ENCODE measurements at regions of chr10 and their contacts with region 1.

Region 1: DNA sequence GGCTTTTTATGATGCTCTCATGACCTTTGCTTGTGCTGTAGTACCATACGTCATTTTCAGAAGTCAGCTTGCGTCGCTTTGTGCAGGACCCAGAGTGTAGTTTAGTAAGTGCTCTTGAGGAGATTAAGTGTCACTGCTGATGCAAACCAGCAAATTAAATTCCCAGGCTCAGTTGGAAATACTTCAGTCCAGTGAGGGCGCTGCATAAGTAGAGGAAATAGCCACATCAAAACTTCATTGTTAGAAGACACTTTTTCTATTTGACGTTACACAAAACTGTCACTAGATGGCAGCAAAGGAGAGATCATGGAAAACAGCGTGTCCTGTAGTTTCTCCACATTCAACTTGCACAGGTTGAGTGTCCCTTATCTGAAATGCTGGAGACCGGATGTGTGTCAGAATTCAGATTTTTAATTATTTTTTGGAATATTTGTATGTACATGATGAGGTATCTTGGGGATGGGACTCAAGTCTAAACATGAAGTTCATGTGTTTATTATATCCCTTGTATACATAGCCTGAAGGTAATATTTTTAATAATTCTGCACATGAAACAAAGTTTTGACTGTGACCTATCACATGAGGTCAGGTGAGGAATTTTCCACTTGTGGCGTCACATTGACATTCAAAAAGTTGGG is 7.9 kb downstream of the ZNF22 start:
- DNase-seq: peak; percentile 87
- ATAC-seq: peak; percentile 98
- H3K4me3 ChIP-seq: no peak overlapping the region
- H3K27ac ChIP-seq: no peak overlapping the region
- H3K4me1 ChIP-seq: peaks cover 0 to 5% of the 10 kb centered on the region in 2 experiments; a peak in 2 of 4 replicates
- H3K27me3 ChIP-seq: no peaks in the 10 kb centered on the region
- CTCF ChIP-seq: peak; percentile 63 to 97 (median 85)
- POLR2A ChIP-seq: no peak
- RAD21 ChIP-seq: peak; percentile 95

Region 2: GRCh38 chr10:44696496-44696895 is 312.1 kb before region 1 on chr10:
- CTCF ChIA-PET with region 1: no interaction called
- POLR2A ChIA-PET with region 1: no interaction called
- RAD21 ChIA-PET with region 1: no interaction called
- intact Hi-C with region 1: no loop called
- DNase-seq: no peak
- ATAC-seq: no peak
- H3K4me3 ChIP-seq: no peak overlapping the region
- H3K27ac ChIP-seq: no peak overlapping the region
- H3K4me1 ChIP-seq: no peaks in the 10 kb centered on the region
- H3K27me3 ChIP-seq: peaks cover 8% of the 10 kb centered on the region; the same call in 1 of the 2 replicates
- CTCF ChIP-seq: no peak
- POLR2A ChIP-seq: no peak
- RAD21 ChIP-seq: no peak

Region 3: GRCh38 chr10:44706745-44707144 is 301.9 kb before region 1 on chr10:
- CTCF ChIA-PET with region 1: no interaction called
- POLR2A ChIA-PET with region 1: no interaction called
- RAD21 ChIA-PET with region 1: no interaction called
- intact Hi-C with region 1: no loop called
- DNase-seq: peak; percentile 3
- ATAC-seq: no peak
- H3K4me3 ChIP-seq: no peak overlapping the region
- H3K27ac ChIP-seq: no peak overlapping the region
- H3K4me1 ChIP-seq: no peaks in the 10 kb centered on the region
- H3K27me3 ChIP-seq: no peaks in the 10 kb centered on the region; the same call in 1 of the 2 replicates
- CTCF ChIP-seq: no peak
- POLR2A ChIP-seq: no peak
- RAD21 ChIP-seq: no peak

Region 4: DNA sequence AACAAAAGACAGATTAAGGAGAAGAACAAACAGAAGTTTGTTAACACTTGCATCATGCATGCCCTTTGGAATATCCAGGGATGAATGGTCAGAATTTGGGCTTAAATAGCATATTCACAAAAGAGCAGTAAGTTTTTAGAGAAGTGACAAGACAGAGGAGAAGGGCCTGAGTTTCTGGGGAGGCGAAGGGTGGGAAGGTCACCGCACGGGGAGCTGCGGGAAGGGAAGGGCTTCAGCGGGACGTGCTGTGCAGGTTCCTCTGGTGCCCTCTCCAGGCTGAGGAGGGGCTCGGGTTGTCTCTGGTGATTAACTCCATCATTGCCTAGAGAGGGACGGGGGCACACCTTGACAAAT is 18.4 kb before region 1 on chr10:
- CTCF ChIA-PET with region 1: no interaction called
- POLR2A ChIA-PET with region 1: no interaction called
- RAD21 ChIA-PET with region 1: no interaction called
- intact Hi-C with region 1: no loop called
- DNase-seq: no peak
- ATAC-seq: peak; percentile 78
- H3K4me3 ChIP-seq: no peak overlapping the region
- H3K27ac ChIP-seq: no peak overlapping the region
- H3K4me1 ChIP-seq: no peaks in the 10 kb centered on the region
- H3K27me3 ChIP-seq: no peaks in the 10 kb centered on the region
- CTCF ChIP-seq: peak; percentile 27 to 41 (median 30); a peak in 4 of 6 replicates
- POLR2A ChIP-seq: no peak
- RAD21 ChIP-seq: peak; percentile 70

Region 5: DNA sequence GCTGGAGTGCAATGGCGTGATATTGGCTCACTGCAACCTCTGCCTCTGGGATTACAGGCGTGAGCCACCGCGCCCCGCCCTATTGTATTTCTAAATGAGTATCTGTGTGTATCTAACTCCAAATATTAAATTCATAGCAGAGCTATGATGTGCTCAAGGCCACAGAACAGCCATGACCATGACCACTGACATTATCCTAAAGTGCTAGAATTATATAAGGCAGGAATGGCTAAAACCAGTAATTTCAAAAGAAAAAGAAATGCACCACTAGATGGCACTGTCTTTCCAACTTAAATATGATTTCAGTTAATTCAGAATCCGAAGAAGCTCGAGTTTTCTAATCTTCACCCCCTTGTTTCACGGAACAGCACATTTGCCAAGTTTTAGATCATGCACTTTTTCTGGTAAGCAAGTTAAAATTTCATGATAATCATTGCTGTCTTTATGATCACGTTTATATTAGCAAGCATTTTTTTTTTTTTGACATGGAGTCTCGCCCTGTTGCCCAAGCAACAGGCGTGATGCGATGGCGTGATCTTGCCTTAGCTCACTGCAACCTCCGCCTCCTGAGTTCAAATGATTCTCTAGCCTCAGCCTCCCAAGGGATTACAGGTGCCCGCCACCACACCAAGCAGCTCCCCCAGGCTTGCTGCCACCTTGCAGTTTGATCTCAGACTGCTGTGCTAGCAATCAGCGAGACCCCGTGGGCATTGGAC is 241.5 kb after region 1 on chr10:
- CTCF ChIA-PET with region 1: no interaction called
- POLR2A ChIA-PET with region 1: no interaction called
- RAD21 ChIA-PET with region 1: no interaction called
- intact Hi-C with region 1: loop called (anchors 5 kb)
- DNase-seq: peak; percentile 53
- ATAC-seq: peak; percentile 85
- H3K4me3 ChIP-seq: peak overlapping the region; percentile 40 to 46
- H3K27ac ChIP-seq: peak overlapping the region; percentile 9; the same call in 1 of the 2 replicates
- H3K4me1 ChIP-seq: peaks cover 0 to 10% of the 10 kb centered on the region in 2 experiments; a peak in 1 of 4 replicates
- H3K27me3 ChIP-seq: no peaks in the 10 kb centered on the region
- CTCF ChIP-seq: peak; percentile 33 to 70 (median 51); a peak in 4 of 6 replicates
- POLR2A ChIP-seq: no peak
- RAD21 ChIP-seq: peak; percentile 74

Region 6: DNA sequence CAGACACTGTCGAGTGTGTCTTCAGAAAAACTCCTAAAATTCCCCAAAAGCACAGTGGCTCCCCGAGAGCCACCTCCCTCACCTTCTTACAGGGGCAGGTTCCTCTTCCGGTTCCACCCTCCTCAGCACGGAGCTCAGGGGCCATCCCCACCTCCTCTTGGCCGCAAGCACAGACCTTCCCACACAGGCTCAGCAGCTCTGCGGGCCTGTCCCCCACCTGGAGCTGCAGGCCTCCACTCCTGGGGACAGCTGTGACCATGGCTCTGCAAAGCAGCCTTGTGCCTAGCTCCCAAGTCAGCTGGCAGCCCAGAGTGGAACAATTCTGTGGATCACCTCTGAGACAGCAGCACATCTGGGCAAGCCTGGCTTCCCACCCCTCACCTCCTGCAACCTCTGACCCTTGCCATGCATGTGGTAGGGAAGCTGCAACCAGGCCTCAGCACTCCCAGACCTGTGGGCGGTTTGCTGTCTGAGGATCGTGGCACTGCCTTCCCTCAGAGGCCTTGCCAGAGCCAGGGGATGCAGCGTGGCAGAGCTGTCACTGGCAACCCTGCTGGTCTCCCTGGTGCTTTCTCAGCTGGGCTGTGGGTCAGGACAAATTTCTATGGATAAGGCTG is 445.1 kb after region 1 on chr10:
- CTCF ChIA-PET with region 1: no interaction called
- POLR2A ChIA-PET with region 1: no interaction called
- RAD21 ChIA-PET with region 1: no interaction called
- intact Hi-C with region 1: loop called (anchors 10 kb)
- DNase-seq: no peak
- ATAC-seq: no peak
- H3K4me3 ChIP-seq: no peak overlapping the region
- H3K27ac ChIP-seq: no peak overlapping the region
- H3K4me1 ChIP-seq: no peaks in the 10 kb centered on the region
- H3K27me3 ChIP-seq: no peaks in the 10 kb centered on the region
- CTCF ChIP-seq: no peak
- POLR2A ChIP-seq: no peak
- RAD21 ChIP-seq: no peak

Region 7: DNA sequence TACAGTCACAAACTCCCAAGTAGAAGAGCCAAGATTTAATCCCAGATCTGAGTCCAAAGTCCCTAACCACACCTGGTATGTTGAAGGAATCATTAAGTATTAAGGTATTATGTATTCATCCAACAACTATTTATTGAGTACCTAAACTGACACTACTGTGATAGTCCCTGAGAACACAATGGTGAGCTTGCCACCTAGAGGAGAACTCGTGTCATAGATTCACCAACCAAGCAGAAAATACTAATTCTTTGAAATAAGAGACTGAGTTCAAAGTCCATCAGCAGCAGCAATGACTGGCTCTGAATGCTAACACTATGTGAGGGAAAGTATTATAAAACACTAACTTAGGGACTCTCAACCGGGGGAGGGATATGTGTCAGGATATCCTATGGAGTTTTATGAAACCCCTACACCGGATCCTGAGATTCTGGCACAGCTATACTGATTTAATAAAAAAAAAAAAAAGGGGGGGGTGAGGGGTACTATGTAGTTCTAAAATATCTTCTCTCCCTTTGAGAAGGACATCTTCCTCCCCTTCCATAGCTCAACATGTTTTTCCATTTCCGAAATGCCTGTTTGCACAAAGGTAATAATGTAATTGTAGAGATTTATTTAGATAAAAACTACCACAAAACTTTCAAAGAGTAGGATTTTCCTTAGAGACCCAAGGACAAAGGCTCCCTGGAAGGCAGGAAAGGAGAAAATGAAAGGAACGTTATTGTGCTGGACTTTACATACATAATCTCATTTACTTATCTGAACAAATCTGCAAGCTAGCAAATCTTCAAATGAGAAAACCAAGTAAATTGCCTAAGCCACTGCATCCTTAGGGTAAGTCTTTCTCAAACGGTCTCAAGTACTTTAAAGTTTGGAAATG is 1020.2 kb after region 1 on chr10:
- CTCF ChIA-PET with region 1: no interaction called
- POLR2A ChIA-PET with region 1: no interaction called
- RAD21 ChIA-PET with region 1: no interaction called
- intact Hi-C with region 1: loop called (anchors 2 kb)
- DNase-seq: peak; percentile 71
- ATAC-seq: peak; percentile 49
- H3K4me3 ChIP-seq: peak overlapping the region; percentile 86
- H3K27ac ChIP-seq: peak overlapping the region; percentile 11; the same call in 1 of the 2 replicates
- H3K4me1 ChIP-seq: peaks cover 9 to 33% of the 10 kb centered on the region in 2 experiments; a peak in 3 of 4 replicates
- H3K27me3 ChIP-seq: no peaks in the 10 kb centered on the region
- CTCF ChIP-seq: peak; percentile 61 to 79 (median 65)
- POLR2A ChIP-seq: no peak
- RAD21 ChIP-seq: peak; percentile 83

Region 8: DNA sequence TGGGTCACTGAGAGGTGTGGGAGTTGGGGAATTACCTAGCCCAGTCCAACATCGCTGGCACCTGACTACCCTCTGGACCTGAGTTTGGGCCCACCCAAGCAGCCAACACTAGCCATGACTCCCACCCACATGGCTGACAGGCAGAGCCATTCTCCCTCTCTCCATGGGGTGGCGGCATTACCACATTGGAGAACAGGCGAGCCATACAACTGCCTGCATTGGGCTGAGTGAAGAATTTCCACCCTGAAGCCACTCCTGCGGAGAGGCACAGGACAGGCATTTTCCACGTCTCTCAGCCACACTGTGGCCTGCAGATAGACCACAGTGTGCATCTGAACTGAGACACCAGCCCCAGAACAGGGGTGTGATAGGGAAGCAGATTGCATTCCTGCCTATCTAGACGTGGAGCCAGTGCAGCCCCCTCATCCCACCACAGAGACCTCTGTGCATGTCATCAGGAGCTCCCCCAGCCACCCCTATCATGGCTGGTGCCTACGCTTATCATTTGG is 1220.0 kb after region 1 on chr10:
- CTCF ChIA-PET with region 1: no interaction called
- POLR2A ChIA-PET with region 1: no interaction called
- RAD21 ChIA-PET with region 1: no interaction called
- intact Hi-C with region 1: loop called (anchors 10 kb)
- DNase-seq: peak; percentile 44
- ATAC-seq: peak; percentile 95
- H3K4me3 ChIP-seq: no peak overlapping the region
- H3K27ac ChIP-seq: no peak overlapping the region
- H3K4me1 ChIP-seq: peaks cover 3 to 11% of the 10 kb centered on the region in 2 experiments; a peak in 2 of 4 replicates
- H3K27me3 ChIP-seq: no peaks in the 10 kb centered on the region
- CTCF ChIP-seq: peak; percentile 88 to 93 (median 89)
- POLR2A ChIP-seq: no peak
- RAD21 ChIP-seq: peak; percentile 96